ENCODE measurements at regions of chr18 and their contacts with region 1.

Region 1: DNA sequence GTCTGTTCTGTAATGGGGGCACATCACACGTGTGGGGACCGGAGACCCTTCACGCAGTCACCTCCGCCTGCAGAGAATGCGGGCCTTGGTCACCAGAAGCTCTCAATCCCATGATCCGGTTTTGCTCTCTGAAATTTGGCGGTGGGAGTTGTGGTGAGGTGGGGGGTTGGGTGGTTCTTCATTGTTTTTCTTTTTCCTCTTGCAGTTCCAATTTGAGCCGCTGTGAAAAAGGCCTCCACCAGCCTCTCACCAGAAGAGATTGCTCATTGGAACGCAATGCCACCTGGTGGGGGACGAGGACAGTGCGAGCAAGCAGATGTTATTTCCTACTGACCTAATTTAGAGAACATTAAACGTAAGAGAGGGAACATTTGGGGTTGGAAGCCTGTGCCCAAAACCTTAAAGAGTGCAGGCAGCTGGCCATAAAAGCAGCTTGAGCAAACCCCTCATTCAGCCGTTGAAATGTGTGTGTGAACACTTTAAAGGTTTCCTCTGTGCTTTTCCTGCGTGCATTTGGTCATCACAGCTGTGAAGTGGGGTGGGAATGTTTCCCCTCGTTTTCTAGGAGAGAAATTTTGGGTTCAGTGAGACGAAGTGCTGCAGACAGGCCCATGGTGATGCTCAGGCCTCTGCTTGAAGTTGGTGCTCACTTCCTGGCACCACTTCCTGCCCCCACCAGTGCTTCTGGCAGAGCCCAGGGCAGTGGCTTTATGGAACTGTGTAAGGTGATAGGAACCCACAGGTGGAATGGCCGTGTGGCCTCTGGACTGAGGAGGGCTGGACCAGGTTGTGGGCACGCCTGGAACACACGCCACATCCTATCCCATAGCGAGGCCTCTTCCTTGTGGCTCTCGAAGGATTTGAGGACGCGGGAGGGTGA is 61.7 kb downstream of the ZCCHC2 start:
- DNase-seq: peak; percentile 61
- ATAC-seq: peak; percentile 95
- H3K4me3 ChIP-seq: peak overlapping the region; percentile 3; the same call in 1 of the 2 replicates
- H3K27ac ChIP-seq: no peak overlapping the region
- H3K4me1 ChIP-seq: peaks cover 20% of the 10 kb centered on the region
- H3K27me3 ChIP-seq: no peaks in the 10 kb centered on the region
- CTCF ChIP-seq: peak; percentile 94 to 99 (median 99); a peak in 5 of 6 replicates
- EP300 ChIP-seq: no peak
- POLR2A ChIP-seq: no peak
- RAD21 ChIP-seq: peak; percentile 96

Region 2: DNA sequence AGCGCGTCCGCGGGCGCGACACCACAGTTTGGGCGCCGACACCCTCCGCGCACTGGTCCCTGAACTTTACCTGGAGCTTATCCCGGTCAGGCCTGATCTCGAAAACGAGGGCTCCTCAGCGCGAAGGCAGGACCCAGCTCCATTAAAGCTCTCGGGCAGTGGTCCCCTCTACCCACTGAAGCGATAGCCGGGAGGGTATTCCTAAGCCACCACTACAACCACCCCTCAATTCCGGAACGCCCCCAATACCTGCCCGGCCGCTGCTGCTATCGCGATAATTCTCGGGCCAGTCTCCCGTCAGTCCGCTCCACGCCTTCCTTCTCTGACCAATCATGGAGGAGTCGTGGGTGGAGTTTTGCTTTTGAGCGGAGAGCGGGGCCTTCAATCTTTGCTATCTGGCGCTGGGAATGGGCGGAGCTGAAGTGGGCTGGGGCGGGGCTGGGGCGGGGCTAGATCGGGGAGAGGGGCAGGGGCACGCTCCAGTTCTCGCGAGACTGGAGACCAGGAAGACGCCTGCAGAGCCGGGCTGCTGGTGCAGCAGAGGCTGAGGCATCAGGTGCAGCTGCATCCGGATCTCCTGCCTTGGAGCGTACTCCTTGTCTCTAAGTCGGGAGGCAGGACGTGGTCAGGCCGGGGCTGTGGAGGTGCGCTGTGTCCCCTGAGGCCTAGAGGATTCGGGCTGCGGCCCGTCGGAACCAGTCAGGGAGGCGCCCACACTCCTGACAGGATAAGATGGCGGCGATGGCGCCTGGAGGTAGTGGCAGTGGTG is 397.5 kb before region 1 on chr18 and contains the starts of genes PIGN and RELCH:
- CTCF ChIA-PET with region 1: interaction called, 19 read pairs
- POLR2A ChIA-PET with region 1: no interaction called
- RAD21 ChIA-PET with region 1: no interaction called
- SMC1A ChIA-PET with region 1: interaction called, 3 read pairs
- in situ Hi-C with region 1: no loop called
- intact Hi-C with region 1: loop called (anchors 1 kb)
- DNase-seq: peak; percentile 92
- ATAC-seq: peak; percentile 90
- H3K4me3 ChIP-seq: peak within 1 kb of the TSS; percentile 99
- H3K27ac ChIP-seq: peak within 1 kb of the TSS; percentile 91
- H3K4me1 ChIP-seq: peaks cover 3% of the 10 kb centered on the region
- H3K27me3 ChIP-seq: no peaks in the 10 kb centered on the region
- CTCF ChIP-seq: no peak
- EP300 ChIP-seq: no peak
- POLR2A ChIP-seq: peak; percentile 98
- RAD21 ChIP-seq: no peak
- polyA plus RNA-seq, gene PIGN: 6.9 to 12.3 TPM
- polyA plus RNA-seq, gene RELCH: 3.1 to 3.4 TPM

Region 3: DNA sequence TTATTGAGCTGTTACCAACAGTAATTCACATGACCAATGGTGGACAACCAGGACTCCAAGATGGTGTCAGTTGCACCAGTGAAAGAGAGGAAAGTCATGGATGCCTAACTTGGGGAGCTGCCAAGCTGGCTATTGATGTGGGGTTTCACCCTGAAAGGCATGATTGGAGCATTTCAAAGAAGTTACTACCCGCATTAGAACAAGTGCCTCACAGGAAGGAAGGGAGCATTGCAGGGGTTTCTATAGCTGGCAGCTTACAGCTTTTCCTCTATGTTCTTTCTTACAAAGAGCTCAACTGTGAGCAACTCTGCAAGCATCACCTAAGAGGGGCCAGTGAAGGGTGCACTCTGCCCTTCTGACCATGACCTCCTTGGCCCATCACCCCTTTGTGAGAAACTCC is 166.2 kb before region 1 on chr18:
- CTCF ChIA-PET with region 1: interaction called, 19 read pairs
- POLR2A ChIA-PET with region 1: no interaction called
- RAD21 ChIA-PET with region 1: interaction called, 5 read pairs
- SMC1A ChIA-PET with region 1: interaction called, 10 read pairs
- in situ Hi-C with region 1: no loop called
- intact Hi-C with region 1: no loop called
- DNase-seq: no peak
- ATAC-seq: peak; percentile 34
- H3K4me3 ChIP-seq: no peak overlapping the region
- H3K27ac ChIP-seq: no peak overlapping the region
- H3K4me1 ChIP-seq: peaks cover 10% of the 10 kb centered on the region
- H3K27me3 ChIP-seq: no peaks in the 10 kb centered on the region
- CTCF ChIP-seq: no peak
- EP300 ChIP-seq: no peak
- POLR2A ChIP-seq: no peak
- RAD21 ChIP-seq: no peak

Region 4: DNA sequence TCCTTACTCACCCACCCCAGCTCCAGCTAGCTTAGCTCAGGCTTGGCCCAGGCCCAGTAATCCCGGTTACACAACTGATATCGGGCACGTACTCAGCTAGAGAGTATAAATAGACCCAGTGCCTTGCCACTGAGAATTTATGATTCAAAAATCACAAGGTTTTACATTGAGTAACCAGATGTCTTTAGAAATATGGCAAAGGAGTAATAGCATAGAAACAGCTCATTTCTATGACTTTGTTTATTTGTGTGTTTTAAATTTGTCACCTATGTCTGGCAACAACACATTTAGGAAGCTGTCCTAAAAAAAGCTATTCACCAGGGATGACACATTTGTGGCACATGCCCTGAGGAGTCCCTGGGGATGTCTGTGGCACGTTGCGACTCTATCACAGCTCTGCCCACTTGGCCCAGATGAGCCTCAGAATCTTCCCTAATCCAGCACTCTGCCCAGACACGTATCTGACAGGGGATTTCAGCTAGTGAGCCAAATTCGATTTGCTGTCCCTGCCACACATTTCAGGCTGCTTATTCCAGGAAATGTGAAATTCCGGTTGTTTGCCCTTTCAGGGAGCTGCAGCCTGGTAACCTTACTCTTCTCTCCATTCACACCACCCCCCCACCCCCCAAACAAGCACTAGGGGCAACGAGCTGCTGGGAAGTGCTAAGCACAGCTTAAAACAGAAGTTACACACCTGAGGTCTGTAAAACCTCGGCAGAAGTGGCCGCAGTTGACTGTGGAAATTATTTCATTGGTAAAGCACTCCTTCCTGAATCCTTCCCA is 147.1 kb before region 1 on chr18:
- CTCF ChIA-PET with region 1: interaction called, 12 read pairs
- POLR2A ChIA-PET with region 1: no interaction called
- RAD21 ChIA-PET with region 1: no interaction called
- SMC1A ChIA-PET with region 1: interaction called, 5 read pairs
- in situ Hi-C with region 1: no loop called
- intact Hi-C with region 1: no loop called
- DNase-seq: no peak
- ATAC-seq: peak; percentile 56; the same call in 2 of the 3 replicates
- H3K4me3 ChIP-seq: no peak overlapping the region
- H3K27ac ChIP-seq: no peak overlapping the region
- H3K4me1 ChIP-seq: no peaks in the 10 kb centered on the region
- H3K27me3 ChIP-seq: no peaks in the 10 kb centered on the region; a peak in 1 of 4 replicates
- CTCF ChIP-seq: no peak
- EP300 ChIP-seq: no peak
- POLR2A ChIP-seq: no peak
- RAD21 ChIP-seq: no peak

Region 5: GRCh38 chr18:62566199-62566598 is 18.3 kb before region 1 on chr18:
- CTCF ChIA-PET with region 1: interaction called, 15 read pairs
- POLR2A ChIA-PET with region 1: no interaction called
- RAD21 ChIA-PET with region 1: no interaction called
- SMC1A ChIA-PET with region 1: interaction called, 7 read pairs
- in situ Hi-C with region 1: no loop called
- intact Hi-C with region 1: no loop called
- DNase-seq: no peak
- ATAC-seq: no peak
- H3K4me3 ChIP-seq: no peak overlapping the region
- H3K27ac ChIP-seq: no peak overlapping the region
- H3K4me1 ChIP-seq: no peaks in the 10 kb centered on the region
- H3K27me3 ChIP-seq: no peaks in the 10 kb centered on the region
- CTCF ChIP-seq: peak in 2 of 3 experiments; percentile 5 to 20; a peak in 2 of 6 replicates
- EP300 ChIP-seq: no peak
- POLR2A ChIP-seq: no peak
- RAD21 ChIP-seq: no peak

Region 6: GRCh38 chr18:62637807-62638687 is 53.6 kb after region 1 on chr18:
- CTCF ChIA-PET with region 1: interaction called, 18 read pairs
- POLR2A ChIA-PET with region 1: no interaction called
- RAD21 ChIA-PET with region 1: no interaction called
- SMC1A ChIA-PET with region 1: no interaction called
- in situ Hi-C with region 1: no loop called
- intact Hi-C with region 1: loop called (anchors 5 kb)
- DNase-seq: no peak
- ATAC-seq: peak; percentile 98
- H3K4me3 ChIP-seq: no peak overlapping the region
- H3K27ac ChIP-seq: no peak overlapping the region
- H3K4me1 ChIP-seq: 0 out of 2 replicates have a peak, but pooled peaks cover 6% of the 10 kb centered on the region
- H3K27me3 ChIP-seq: no peaks in the 10 kb centered on the region
- CTCF ChIP-seq: peak; percentile 74 to 84 (median 82)
- EP300 ChIP-seq: no peak
- POLR2A ChIP-seq: no peak
- RAD21 ChIP-seq: peak; percentile 65

Region 7: GRCh38 chr18:62957885-62958472 is 373.5 kb after region 1 on chr18:
- CTCF ChIA-PET with region 1: interaction called, 55 read pairs
- POLR2A ChIA-PET with region 1: no interaction called
- RAD21 ChIA-PET with region 1: interaction called, 14 read pairs
- SMC1A ChIA-PET with region 1: interaction called, 15 read pairs
- in situ Hi-C with region 1: no loop called
- intact Hi-C with region 1: loop called (anchors 10 kb)
- DNase-seq: no peak
- ATAC-seq: peak; percentile 99
- H3K4me3 ChIP-seq: no peak overlapping the region
- H3K27ac ChIP-seq: no peak overlapping the region
- H3K4me1 ChIP-seq: no peaks in the 10 kb centered on the region
- H3K27me3 ChIP-seq: no peaks in the 10 kb centered on the region
- CTCF ChIP-seq: peak; percentile 38 to 45 (median 43); a peak in 5 of 6 replicates
- EP300 ChIP-seq: no peak
- POLR2A ChIP-seq: no peak
- RAD21 ChIP-seq: peak; percentile 60